ENCODE measurements at regions of chr1 and their contacts with region 1.

Region 1: GRCh38 chr1:150429805-150430204 is 57.4 kb upstream of the TARS2 start:
- DNase-seq: no peak
- H3K4me3 ChIP-seq: no peak overlapping the region
- H3K27ac ChIP-seq: no peak overlapping the region
- H3K4me1 ChIP-seq: no peaks in the 10 kb centered on the region
- H3K27me3 ChIP-seq: no peaks in the 10 kb centered on the region
- CTCF ChIP-seq: peak in 2 of 3 experiments; percentile 6 to 20
- EP300 ChIP-seq: no peak
- POLR2A ChIP-seq: no peak

Region 2: GRCh38 chr1:150372580-150372979 is 57.2 kb before region 1 on chr1:
- intact Hi-C with region 1: loop called (anchors 10 kb)
- DNase-seq: no peak
- H3K4me3 ChIP-seq: no peak overlapping the region
- H3K27ac ChIP-seq: no peak overlapping the region
- H3K4me1 ChIP-seq: peaks cover 28 to 78% (median 74%) of the 10 kb centered on the region in 4 donors
- H3K27me3 ChIP-seq: no peaks in the 10 kb centered on the region
- CTCF ChIP-seq: no peak
- EP300 ChIP-seq: no peak
- POLR2A ChIP-seq: no peak